ENCODE measurements at regions of chr4 and their contacts with region 1.

Region 1: GRCh38 chr4:10013722-10014121 is 7.6 kb downstream of the SLC2A9 start:
- DNase-seq: peak; percentile 47 to 85
- H3K4me3 ChIP-seq: no peak overlapping the region
- H3K27ac ChIP-seq: no peak overlapping the region
- H3K4me1 ChIP-seq: peaks cover 0 to 4% (median 0%) of the 10 kb centered on the region in 4 experiments; a peak in 1 of 7 replicates
- H3K27me3 ChIP-seq: no peaks in the 10 kb centered on the region; a peak in 1 of 7 replicates
- CTCF ChIP-seq: peak in 2 of 3 experiments; percentile 78 to 82; a peak in 3 of 4 replicates
- EP300 ChIP-seq: no peak
- POLR2A ChIP-seq: no peak
- RAD21 ChIP-seq: peak; percentile 78 to 82

Region 2: GRCh38 chr4:9691238-9692065 is 322.3 kb before region 1 on chr4:
- CTCF ChIA-PET with region 1: interaction called, 11 read pairs
- POLR2A ChIA-PET with region 1: no interaction called
- DNase-seq: peak; percentile 92 to 97
- H3K4me3 ChIP-seq: peak overlapping the region; percentile 30 to 60 (median 46); a peak in 7 of 8 replicates
- H3K27ac ChIP-seq: peak overlapping the region; percentile 63; the same call in 1 of the 2 replicates
- H3K4me1 ChIP-seq: peaks cover 0 to 5% (median under 1%) of the 10 kb centered on the region in 4 experiments; a peak in 1 of 7 replicates
- H3K27me3 ChIP-seq: no peaks in the 10 kb centered on the region
- CTCF ChIP-seq: no peak
- EP300 ChIP-seq: no peak
- POLR2A ChIP-seq: peak in 1 of 2 experiments; percentile 47; a peak in 1 of 3 replicates
- RAD21 ChIP-seq: no peak

Region 3: DNA sequence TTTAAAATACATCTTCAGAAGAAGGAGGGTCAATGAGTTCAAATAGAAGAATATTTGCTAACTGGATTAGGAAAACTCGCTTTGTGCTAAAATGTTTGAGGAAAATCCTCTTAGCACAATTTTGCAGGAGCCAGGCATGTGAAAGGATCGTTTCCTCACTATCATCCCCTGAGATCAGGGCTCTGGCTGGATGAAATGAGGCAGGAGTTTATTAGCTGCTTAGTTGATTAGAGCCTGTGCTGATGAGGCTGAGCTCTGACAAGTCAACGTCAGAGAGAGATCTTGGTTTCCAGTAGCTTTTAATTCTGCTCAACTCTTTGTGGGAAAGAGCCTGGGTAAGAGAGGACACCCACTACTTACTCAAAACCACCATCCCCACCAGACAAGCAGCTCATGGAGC is 240.3 kb before region 1 on chr4:
- CTCF ChIA-PET with region 1: interaction called, 20 read pairs
- POLR2A ChIA-PET with region 1: no interaction called
- DNase-seq: no peak
- H3K4me3 ChIP-seq: no peak overlapping the region
- H3K27ac ChIP-seq: no peak overlapping the region
- H3K4me1 ChIP-seq: no peaks in the 10 kb centered on the region
- H3K27me3 ChIP-seq: no peaks in the 10 kb centered on the region
- CTCF ChIP-seq: no peak
- EP300 ChIP-seq: no peak
- POLR2A ChIP-seq: no peak
- RAD21 ChIP-seq: no peak

Region 4: GRCh38 chr4:9898596-9899305 is 115.0 kb before region 1 on chr4:
- CTCF ChIA-PET with region 1: interaction called, 57 read pairs
- POLR2A ChIA-PET with region 1: no interaction called
- DNase-seq: peak; percentile 68 to 71
- H3K4me3 ChIP-seq: no peak overlapping the region
- H3K27ac ChIP-seq: no peak overlapping the region
- H3K4me1 ChIP-seq: peaks cover 0 to 3% (median 0%) of the 10 kb centered on the region in 4 experiments; a peak in 2 of 7 replicates
- H3K27me3 ChIP-seq: no peaks in the 10 kb centered on the region
- CTCF ChIP-seq: peak; percentile 56 to 90 (median 79)
- EP300 ChIP-seq: no peak
- POLR2A ChIP-seq: no peak
- RAD21 ChIP-seq: peak; percentile 84 to 91

Region 5: GRCh38 chr4:9924750-9925149 is 89.0 kb before region 1 on chr4:
- CTCF ChIA-PET with region 1: interaction called, 64 read pairs
- POLR2A ChIA-PET with region 1: no interaction called
- DNase-seq: no peak
- H3K4me3 ChIP-seq: no peak overlapping the region
- H3K27ac ChIP-seq: no peak overlapping the region
- H3K4me1 ChIP-seq: peaks cover 0 to 8% (median 4%) of the 10 kb centered on the region in 4 experiments; a peak in 3 of 7 replicates
- H3K27me3 ChIP-seq: no peaks in the 10 kb centered on the region
- CTCF ChIP-seq: no peak
- EP300 ChIP-seq: no peak
- POLR2A ChIP-seq: no peak
- RAD21 ChIP-seq: no peak

Region 6: DNA sequence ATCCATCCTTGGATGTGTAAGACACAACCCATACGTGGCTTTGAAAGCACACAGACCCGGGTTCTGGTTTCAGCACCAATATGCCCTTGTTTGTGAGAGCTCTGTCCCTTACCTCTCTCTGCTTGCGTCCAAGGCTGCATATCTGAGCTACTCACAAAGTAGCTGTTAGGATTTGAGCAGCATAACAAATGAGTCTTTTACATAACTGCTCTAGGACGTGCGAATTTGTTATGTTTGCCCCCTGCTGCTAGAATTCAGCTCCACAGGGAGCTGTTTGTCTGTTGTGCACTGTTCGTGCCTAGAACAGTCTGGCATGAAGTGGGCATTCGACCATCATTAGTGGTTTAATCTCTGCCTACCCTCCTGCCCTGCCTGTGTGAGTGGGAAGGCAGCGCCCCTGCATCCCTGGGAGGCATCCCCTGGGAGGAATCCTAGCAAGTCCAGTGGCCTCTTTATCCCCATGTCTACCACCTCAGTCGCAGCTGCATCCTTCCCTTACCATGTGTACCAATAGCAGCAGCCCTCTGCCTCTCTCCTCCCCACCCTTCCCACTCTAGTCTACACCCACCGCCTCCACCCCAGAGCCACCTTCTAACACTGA is 34.5 kb before region 1 on chr4:
- CTCF ChIA-PET with region 1: interaction called, 20 read pairs
- POLR2A ChIA-PET with region 1: no interaction called
- DNase-seq: peak in 1 of 2 experiments; percentile 17
- H3K4me3 ChIP-seq: 0 out of 8 replicates have a peak overlapping the region, but pooled peaks of 1 of the 4 experiments have one; percentile 10
- H3K27ac ChIP-seq: no peak overlapping the region
- H3K4me1 ChIP-seq: peaks cover 3 to 13% (median 10%) of the 10 kb centered on the region in 4 experiments
- H3K27me3 ChIP-seq: peaks cover 3 to 10% (median 7%) of the 10 kb centered on the region in 4 experiments; a peak in 5 of 7 replicates
- CTCF ChIP-seq: 0 out of 4 replicates have a peak, but pooled peaks of 1 of the 3 experiments have one; percentile 2
- EP300 ChIP-seq: no peak
- POLR2A ChIP-seq: no peak
- RAD21 ChIP-seq: no peak

Measured in H1 (cell line).